ENCODE measurements at regions of chr18 and their contacts with region 1.

Region 1: DNA sequence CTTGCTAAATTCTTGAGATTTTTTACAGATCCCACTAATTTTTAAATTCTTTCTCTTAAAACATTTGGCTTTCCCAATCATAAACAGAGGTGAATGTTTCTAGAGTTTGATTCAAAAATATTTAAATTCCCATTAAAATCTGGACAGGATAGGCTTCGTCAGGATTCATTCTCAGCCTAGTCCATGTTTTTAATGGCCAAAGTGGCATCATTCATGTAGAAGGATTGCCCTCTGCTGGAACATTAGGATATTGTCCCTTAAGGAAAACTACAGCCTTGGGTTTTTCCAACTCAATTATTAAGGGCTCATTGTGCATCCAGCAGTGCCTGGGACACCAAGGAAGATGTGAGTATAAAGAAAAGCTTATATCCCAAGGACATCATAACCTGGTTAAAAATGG is 71.7 kb downstream of the TPGS2 start:
- DNase-seq: no peak
- ATAC-seq: peak; percentile 83 to 84
- H3K4me3 ChIP-seq: no peak overlapping the region
- H3K27ac ChIP-seq: no peak overlapping the region
- H3K4me1 ChIP-seq: peaks cover 5 to 14% of the 10 kb centered on the region in 2 donors
- H3K27me3 ChIP-seq: no peaks in the 10 kb centered on the region
- CTCF ChIP-seq: peak; percentile 60 to 66 (median 65)
- POLR2A ChIP-seq: no peak

Region 2: GRCh38 chr18:36650906-36651305 is 106.2 kb before region 1 on chr18:
- in situ Hi-C with region 1: no loop called
- intact Hi-C with region 1: no loop called
- DNase-seq: no peak
- ATAC-seq: no peak
- H3K4me3 ChIP-seq: no peak overlapping the region
- H3K27ac ChIP-seq: no peak overlapping the region
- H3K4me1 ChIP-seq: no peaks in the 10 kb centered on the region
- H3K27me3 ChIP-seq: no peaks in the 10 kb centered on the region
- CTCF ChIP-seq: no peak
- POLR2A ChIP-seq: no peak

Region 3: GRCh38 chr18:36688020-36688965 is 68.8 kb before region 1 on chr18:
- in situ Hi-C with region 1: loop called (anchors 5 to 10 kb)
- intact Hi-C with region 1: loop called (anchors 1 kb)
- DNase-seq: peak in 1 of 2 donors; percentile 52
- ATAC-seq: peak; percentile 73 to 80
- H3K4me3 ChIP-seq: no peak overlapping the region
- H3K27ac ChIP-seq: no peak overlapping the region
- H3K4me1 ChIP-seq: no peaks in the 10 kb centered on the region
- H3K27me3 ChIP-seq: no peaks in the 10 kb centered on the region
- CTCF ChIP-seq: peak; percentile 70 to 86 (median 83)
- POLR2A ChIP-seq: no peak

Region 4: GRCh38 chr18:36693931-36694620 is 63.0 kb before region 1 on chr18:
- in situ Hi-C with region 1: loop called (anchors 5 to 10 kb)
- intact Hi-C with region 1: no loop called
- DNase-seq: no peak
- ATAC-seq: no peak
- H3K4me3 ChIP-seq: no peak overlapping the region
- H3K27ac ChIP-seq: no peak overlapping the region
- H3K4me1 ChIP-seq: peaks cover 6% of the 10 kb centered on the region in 2 donors
- H3K27me3 ChIP-seq: no peaks in the 10 kb centered on the region
- CTCF ChIP-seq: no peak
- POLR2A ChIP-seq: no peak

Region 5: DNA sequence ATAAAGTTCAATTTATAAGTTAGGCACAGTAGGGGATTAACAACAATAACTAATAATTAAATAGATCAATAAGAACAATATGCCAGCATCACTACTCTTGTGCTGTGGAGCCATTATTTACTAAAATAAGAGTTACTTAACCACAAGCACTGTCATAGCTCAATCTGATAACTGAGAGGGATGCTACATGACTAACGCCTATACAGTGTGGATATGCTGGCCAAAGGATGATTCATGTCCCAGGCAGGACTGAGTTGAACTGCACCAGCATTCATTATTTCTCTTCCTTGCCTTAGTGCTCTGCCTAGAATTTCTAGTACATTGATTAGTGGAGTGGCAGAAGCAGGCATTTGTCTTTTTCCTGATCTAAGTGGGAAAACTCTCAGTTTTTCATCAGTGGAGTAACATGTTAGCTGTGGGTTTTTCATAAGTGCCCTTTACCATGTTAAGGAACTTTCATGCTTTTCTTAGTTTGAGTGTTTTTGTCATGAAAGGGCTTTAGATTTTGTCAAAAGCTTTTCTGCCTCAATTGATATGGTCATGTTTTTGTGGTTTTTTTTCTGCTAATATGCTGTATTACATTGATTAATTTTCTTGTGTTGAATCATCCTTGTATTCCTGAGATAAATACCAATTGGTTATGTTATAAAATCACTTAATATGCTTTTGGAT is 93.6 kb after region 1 on chr18:
- in situ Hi-C with region 1: no loop called
- intact Hi-C with region 1: no loop called
- DNase-seq: no peak
- ATAC-seq: peak; percentile 33 to 82
- H3K4me3 ChIP-seq: no peak overlapping the region
- H3K27ac ChIP-seq: no peak overlapping the region
- H3K4me1 ChIP-seq: no peaks in the 10 kb centered on the region
- H3K27me3 ChIP-seq: no peaks in the 10 kb centered on the region
- CTCF ChIP-seq: no peak
- POLR2A ChIP-seq: no peak

Measured in gastrocnemius medialis (tissue), 4 donors.